Activated naive CD4-positive, alpha-beta T cell treated with anti-CD3 and anti-CD28 coated beads for 36 hours (primary cell): ENCODE measurements at regions of chr11 and their contacts with region 1.

Region 1: GRCh38 chr11:65471410-65471762 is 27.5 kb upstream of the MALAT1 start:
- DNase-seq: peak; percentile 64
- H3K4me3 Mint-ChIP-seq: peak overlapping the region; percentile 69
- H3K27ac Mint-ChIP-seq: peak overlapping the region; percentile 95
- H3K4me1 Mint-ChIP-seq: peaks cover 44% of the 10 kb centered on the region
- H3K27me3 Mint-ChIP-seq: no peaks in the 10 kb centered on the region

Region 2: GRCh38 chr11:65382033-65382807 is 89.2 kb before region 1 on chr11 and contains the start of gene SLC25A45:
- CTCF ChIA-PET with region 1: interaction called, 3 read pairs
- intact Hi-C with region 1: loop called (anchors 1 kb)
- DNase-seq: peak; percentile 97
- H3K4me3 Mint-ChIP-seq: peak within 1 kb of the TSS; percentile 96
- H3K27ac Mint-ChIP-seq: peak within 1 kb of the TSS; percentile 100
- H3K4me1 Mint-ChIP-seq: peaks cover 48% of the 10 kb centered on the region
- H3K27me3 Mint-ChIP-seq: no peaks in the 10 kb centered on the region
- total RNA-seq, gene SLC25A45: 10.4 to 12.1 TPM

Region 3: DNA sequence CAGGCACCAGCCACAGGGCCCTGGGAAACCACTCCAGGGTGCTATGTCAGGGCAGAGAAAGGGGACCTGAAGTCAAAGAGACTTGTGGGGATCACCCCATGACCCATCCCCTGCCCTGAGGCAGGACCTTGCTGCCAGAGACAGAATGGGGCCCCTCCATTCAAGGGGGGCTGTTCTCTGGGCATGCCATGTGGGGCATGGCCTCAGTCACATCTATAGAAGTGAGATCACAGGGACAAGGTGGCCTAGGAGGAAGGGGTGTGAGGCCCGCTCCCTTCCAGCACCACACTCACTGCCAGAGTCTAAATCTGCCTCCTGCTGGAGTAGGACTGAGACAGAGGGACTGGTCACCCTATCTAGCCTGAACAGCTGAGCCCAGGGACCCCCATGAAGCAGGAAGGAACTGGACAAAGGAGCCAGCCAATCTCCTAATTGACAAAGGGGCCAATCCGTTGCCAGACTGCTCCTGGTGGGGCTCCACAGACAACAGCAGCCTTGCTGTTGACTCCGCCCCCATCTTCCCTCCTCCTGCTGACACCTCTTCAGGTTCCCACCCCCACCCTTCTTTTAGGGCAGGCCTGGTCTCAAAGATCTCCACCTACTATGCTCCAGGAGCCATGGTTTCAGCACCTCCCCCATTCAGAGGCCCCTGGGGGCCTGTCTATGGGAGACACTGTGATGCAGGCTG is 22.8 kb before region 1 on chr11:
- CTCF ChIA-PET with region 1: interaction called, 10 read pairs
- intact Hi-C with region 1: no loop called
- DNase-seq: no peak
- H3K4me3 Mint-ChIP-seq: no peak overlapping the region
- H3K27ac Mint-ChIP-seq: peak overlapping the region; percentile 30
- H3K4me1 Mint-ChIP-seq: peaks cover 19% of the 10 kb centered on the region
- H3K27me3 Mint-ChIP-seq: no peaks in the 10 kb centered on the region

Region 4: DNA sequence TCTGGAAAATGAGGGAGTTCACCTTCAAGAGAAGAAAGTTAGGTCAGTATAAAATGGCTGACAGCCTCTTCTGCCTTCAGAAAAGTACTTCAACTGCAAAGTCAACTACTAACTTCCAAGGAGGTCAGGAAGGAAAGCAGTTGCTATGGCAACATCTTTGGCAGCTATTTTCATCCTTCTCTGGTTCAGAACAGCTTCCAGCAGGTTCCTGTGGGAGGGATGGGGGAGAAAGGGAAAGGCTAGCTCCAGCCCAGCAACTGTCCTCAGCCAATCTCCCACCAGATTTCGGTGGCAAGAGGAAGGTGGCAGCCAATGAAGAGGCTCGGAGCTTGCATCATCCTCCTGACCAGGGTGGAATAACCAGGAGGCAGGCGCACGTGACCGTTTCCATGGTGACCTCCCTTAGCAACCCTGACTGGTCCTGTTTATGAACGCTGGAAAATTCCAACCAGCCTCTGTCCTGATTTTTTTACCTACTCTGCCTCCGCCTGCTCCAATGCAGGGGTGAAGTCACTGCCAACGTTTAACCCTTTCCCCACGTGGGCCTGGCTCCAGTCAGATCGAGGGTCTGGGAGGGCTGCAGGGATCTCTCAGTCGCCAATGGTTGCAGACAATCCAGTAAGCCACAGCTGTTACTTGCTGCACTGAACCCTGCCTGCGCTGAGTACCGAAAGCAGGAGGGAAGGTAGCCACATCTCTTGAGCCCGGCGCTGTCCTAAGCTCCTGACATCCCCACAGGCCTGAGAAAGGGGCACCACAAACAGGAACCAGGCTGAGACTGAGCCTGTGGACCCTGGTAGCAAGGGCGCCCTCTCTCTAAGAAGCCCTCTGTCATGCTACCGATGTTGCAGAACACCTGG is 16.3 kb after region 1 on chr11:
- CTCF ChIA-PET with region 1: interaction called, 20 read pairs
- intact Hi-C with region 1: no loop called
- DNase-seq: peak; percentile 83
- H3K4me3 Mint-ChIP-seq: peak overlapping the region; percentile 59
- H3K27ac Mint-ChIP-seq: peak overlapping the region; percentile 72
- H3K4me1 Mint-ChIP-seq: peaks cover 63% of the 10 kb centered on the region
- H3K27me3 Mint-ChIP-seq: no peaks in the 10 kb centered on the region

Region 5: GRCh38 chr11:65506770-65507505 is 35.6 kb after region 1 on chr11:
- CTCF ChIA-PET with region 1: interaction called, 22 read pairs
- intact Hi-C with region 1: loop called (anchors 1 kb)
- DNase-seq: peak; percentile 80
- H3K4me3 Mint-ChIP-seq: no peak overlapping the region
- H3K27ac Mint-ChIP-seq: no peak overlapping the region
- H3K4me1 Mint-ChIP-seq: peaks cover 40% of the 10 kb centered on the region
- H3K27me3 Mint-ChIP-seq: no peaks in the 10 kb centered on the region